ENCODE measurements at regions of chr11 and their contacts with region 1.

Region 1: DNA sequence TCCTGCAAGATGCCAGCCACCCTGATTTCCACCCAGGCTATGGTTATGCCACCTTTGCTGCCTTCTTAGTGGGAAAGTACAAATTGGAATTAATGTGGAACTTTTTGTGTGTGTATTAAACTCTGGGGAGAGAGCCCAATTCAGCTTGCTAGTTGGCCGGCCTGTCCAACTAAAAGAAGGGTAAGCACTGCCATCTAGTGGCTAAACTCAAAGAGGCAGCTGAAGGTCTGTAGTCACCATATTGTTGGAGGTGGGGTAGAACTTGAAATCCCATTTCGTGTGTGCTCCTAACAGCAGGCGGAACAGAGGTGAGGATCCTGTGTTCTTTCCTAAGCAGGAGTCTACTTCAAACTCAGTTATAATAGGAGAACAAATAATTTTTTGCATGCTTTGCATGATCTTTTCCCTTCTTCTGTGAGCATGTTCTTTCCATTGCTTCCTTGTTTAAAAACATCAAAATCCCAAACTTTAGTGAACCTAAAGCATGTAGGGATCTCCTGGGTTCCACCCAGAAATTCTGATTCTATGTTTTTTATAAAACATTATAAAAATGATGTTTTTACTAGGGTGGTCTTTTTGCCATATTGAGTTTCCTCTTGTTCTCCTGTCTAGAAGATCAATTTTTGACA is 138.8 kb upstream of the SORL1-AS1 start:
- DNase-seq: peak; percentile 78
- H3K4me3 ChIP-seq: no peak overlapping the region
- H3K27ac ChIP-seq: no peak overlapping the region
- H3K4me1 ChIP-seq: peaks cover 2 to 7% of the 10 kb centered on the region in 2 experiments; a peak in 2 of 4 replicates
- H3K27me3 ChIP-seq: no peaks in the 10 kb centered on the region; the same call in 1 of the 2 replicates
- CTCF ChIP-seq: peak; percentile 86
- EP300 ChIP-seq: no peak
- RAD21 ChIP-seq: peak; percentile 98

Region 2: GRCh38 chr11:121241343-121242211 is 349.9 kb before region 1 on chr11:
- CTCF ChIA-PET with region 1: interaction called, 18 read pairs
- POLR2A ChIA-PET with region 1: no interaction called
- DNase-seq: peak; percentile 30
- H3K4me3 ChIP-seq: no peak overlapping the region
- H3K27ac ChIP-seq: peak overlapping the region in 1 of 2 experiments; percentile 74; a peak in 2 of 4 replicates
- H3K4me1 ChIP-seq: peaks cover 0 to 24% of the 10 kb centered on the region in 2 experiments; a peak in 2 of 4 replicates
- H3K27me3 ChIP-seq: no peaks in the 10 kb centered on the region; the same call in 1 of the 2 replicates
- CTCF ChIP-seq: no peak
- EP300 ChIP-seq: no peak
- RAD21 ChIP-seq: no peak

Region 3: GRCh38 chr11:121249039-121249663 is 342.4 kb before region 1 on chr11:
- CTCF ChIA-PET with region 1: interaction called, 18 read pairs
- POLR2A ChIA-PET with region 1: no interaction called
- DNase-seq: peak; percentile 64
- H3K4me3 ChIP-seq: no peak overlapping the region; a peak in 1 of 4 replicates
- H3K27ac ChIP-seq: no peak overlapping the region
- H3K4me1 ChIP-seq: no peaks in the 10 kb centered on the region; a peak in 1 of 4 replicates
- H3K27me3 ChIP-seq: no peaks in the 10 kb centered on the region; the same call in 1 of the 2 replicates
- CTCF ChIP-seq: peak; percentile 80
- EP300 ChIP-seq: no peak
- RAD21 ChIP-seq: peak; percentile 62

Region 4: GRCh38 chr11:121318848-121319834 is 272.4 kb before region 1 on chr11:
- CTCF ChIA-PET with region 1: interaction called, 90 read pairs
- POLR2A ChIA-PET with region 1: no interaction called
- DNase-seq: peak; percentile 68
- H3K4me3 ChIP-seq: no peak overlapping the region; a peak in 1 of 4 replicates
- H3K27ac ChIP-seq: no peak overlapping the region
- H3K4me1 ChIP-seq: peaks cover 0 to 2% of the 10 kb centered on the region in 2 experiments; a peak in 1 of 4 replicates
- H3K27me3 ChIP-seq: no peaks in the 10 kb centered on the region; the same call in 1 of the 2 replicates
- CTCF ChIP-seq: peak; percentile 75
- EP300 ChIP-seq: no peak
- RAD21 ChIP-seq: peak; percentile 87

Region 5: GRCh38 chr11:121446752-121447156 is 144.8 kb before region 1 on chr11:
- CTCF ChIA-PET with region 1: interaction called, 21 read pairs
- POLR2A ChIA-PET with region 1: no interaction called
- DNase-seq: peak; percentile 67
- H3K4me3 ChIP-seq: no peak overlapping the region
- H3K27ac ChIP-seq: no peak overlapping the region
- H3K4me1 ChIP-seq: peaks cover 0 to 2% of the 10 kb centered on the region in 2 experiments; a peak in 1 of 4 replicates
- H3K27me3 ChIP-seq: peaks cover 14% of the 10 kb centered on the region; the same call in 1 of the 2 replicates
- CTCF ChIP-seq: peak; percentile 39
- EP300 ChIP-seq: no peak
- RAD21 ChIP-seq: peak; percentile 62

Region 6: DNA sequence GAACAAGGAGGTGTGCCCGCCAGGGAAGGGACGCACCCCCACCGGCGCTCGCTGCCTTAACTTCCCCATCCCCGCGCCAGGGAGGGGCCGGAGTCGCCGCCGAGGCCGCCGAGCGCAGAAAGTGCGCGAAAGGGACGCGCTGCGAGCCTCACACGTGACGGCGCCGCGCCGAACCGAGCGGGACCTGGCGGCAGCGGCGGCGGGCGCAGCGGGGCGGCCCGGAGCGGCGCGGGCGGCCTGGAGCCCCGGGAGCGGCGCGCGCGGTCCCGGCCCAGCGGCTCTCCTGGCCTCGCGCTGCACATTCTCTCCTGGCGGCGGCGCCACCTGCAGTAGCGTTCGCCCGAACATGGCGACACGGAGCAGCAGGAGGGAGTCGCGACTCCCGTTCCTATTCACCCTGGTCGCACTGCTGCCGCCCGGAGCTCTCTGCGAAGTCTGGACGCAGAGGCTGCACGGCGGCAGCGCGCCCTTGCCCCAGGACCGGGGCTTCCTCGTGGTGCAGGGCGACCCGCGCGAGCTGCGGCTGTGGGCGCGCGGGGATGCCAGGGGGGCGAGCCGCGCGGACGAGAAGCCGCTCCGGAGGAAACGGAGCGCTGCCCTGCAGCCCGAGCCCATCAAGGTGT is 139.4 kb before region 1 on chr11 and contains the start of gene SORL1:
- CTCF ChIA-PET with region 1: interaction called, 21 read pairs
- POLR2A ChIA-PET with region 1: no interaction called
- DNase-seq: peak; percentile 93
- H3K4me3 ChIP-seq: peak within 1 kb of the TSS; percentile 71 to 86
- H3K27ac ChIP-seq: peak within 1 kb of the TSS in 1 of 2 experiments; percentile 62; a peak in 1 of 4 replicates
- H3K4me1 ChIP-seq: peaks cover 0 to 11% of the 10 kb centered on the region in 2 experiments; a peak in 2 of 4 replicates
- H3K27me3 ChIP-seq: peaks cover 44% of the 10 kb centered on the region
- CTCF ChIP-seq: peak; percentile 57
- EP300 ChIP-seq: no peak
- RAD21 ChIP-seq: peak; percentile 58
- polyA plus RNA-seq, gene SORL1: 6.1 and 7.1 TPM in 2 replicates

Region 7: DNA sequence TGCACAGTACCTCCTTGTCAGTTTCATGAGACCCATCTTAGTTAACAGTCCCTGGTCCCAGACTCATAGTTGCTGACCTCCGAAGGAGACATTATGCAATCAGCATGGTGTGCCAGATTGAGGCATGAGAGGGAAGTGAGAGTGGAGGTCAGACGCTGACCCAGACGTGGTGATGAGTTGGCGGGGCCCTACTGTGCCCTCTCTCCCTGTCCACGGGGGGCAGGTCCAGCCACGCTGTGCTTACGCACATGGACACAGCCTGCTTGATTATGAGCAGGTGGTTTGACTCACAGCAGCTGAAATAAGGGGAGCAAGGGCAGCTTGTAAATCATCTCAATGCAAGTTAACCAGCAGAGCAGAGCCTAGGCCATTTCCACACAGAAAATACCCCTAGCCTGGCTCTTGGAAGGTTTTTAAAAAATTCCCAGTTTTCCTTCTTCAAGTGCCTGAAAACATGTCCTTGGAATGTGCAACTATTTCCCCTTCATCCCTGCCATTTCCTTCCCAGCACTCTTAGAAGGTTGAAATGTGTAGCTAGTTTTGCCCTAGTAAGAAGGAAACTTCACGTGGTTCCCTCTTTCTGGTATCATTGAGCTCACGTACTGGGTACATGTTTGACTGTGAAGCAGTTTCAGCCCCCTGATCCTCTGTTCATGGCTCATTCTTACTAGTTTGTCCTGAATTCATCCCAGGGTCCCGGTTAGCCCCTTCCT is 16.1 kb before region 1 on chr11:
- CTCF ChIA-PET with region 1: interaction called, 22 read pairs
- POLR2A ChIA-PET with region 1: no interaction called
- DNase-seq: no peak
- H3K4me3 ChIP-seq: no peak overlapping the region
- H3K27ac ChIP-seq: no peak overlapping the region
- H3K4me1 ChIP-seq: peaks cover 0 to 8% of the 10 kb centered on the region in 2 experiments; a peak in 1 of 4 replicates
- H3K27me3 ChIP-seq: no peaks in the 10 kb centered on the region
- CTCF ChIP-seq: no peak
- EP300 ChIP-seq: no peak
- RAD21 ChIP-seq: no peak